ENCODE measurements at regions of chr1 and their contacts with region 1.

Region 1: DNA sequence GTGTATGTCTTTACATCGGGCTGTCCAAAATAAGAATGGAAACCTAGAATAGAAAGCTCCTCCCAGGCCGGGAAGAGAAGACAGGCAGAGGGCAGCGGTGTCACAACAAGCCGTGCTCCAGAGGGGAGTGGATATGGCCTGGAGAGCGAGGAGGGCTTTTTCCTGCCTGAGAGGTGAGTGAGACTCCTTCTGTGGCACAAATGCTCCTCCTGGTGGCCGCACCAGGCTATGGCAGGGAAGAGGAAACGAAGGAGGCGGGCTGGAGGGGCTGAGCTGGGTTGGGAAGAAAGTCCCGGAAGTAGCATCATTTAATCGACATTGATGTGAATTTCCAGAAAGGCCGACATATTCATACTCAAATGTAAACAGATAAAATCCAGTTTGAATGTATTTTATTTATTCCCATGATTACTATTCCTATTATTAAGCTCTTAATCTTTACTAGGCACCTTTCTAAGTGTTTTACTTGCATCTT is 54.7 kb downstream of the MEF2D start:
- DNase-seq: peak; percentile 79 to 86 (median 84)
- ATAC-seq: peak; percentile 96
- H3K4me3 ChIP-seq: no peak overlapping the region
- H3K27ac ChIP-seq: no peak overlapping the region
- H3K4me1 ChIP-seq: peaks cover under 1 to 5% of the 10 kb centered on the region in 2 experiments; a peak in 2 of 5 replicates
- H3K27me3 ChIP-seq: peaks cover 33 to 34% of the 10 kb centered on the region in 2 experiments
- CTCF ChIP-seq: peak; percentile 94 to 97 (median 96)
- EP300 ChIP-seq: no peak
- POLR2A ChIP-seq: no peak
- RAD21 ChIP-seq: peak; percentile 93 to 98

Region 2: GRCh38 chr1:155884031-155884960 is 561.5 kb before region 1 on chr1:
- CTCF ChIA-PET with region 1: no interaction called
- POLR2A ChIA-PET with region 1: no interaction called
- in situ Hi-C with region 1: no loop called
- intact Hi-C with region 1: no loop called
- DNase-seq: peak in 2 of 4 experiments; percentile 29 to 45
- ATAC-seq: peak; percentile 79
- H3K4me3 ChIP-seq: no peak overlapping the region
- H3K27ac ChIP-seq: peak overlapping the region; percentile 27; the same call in 2 of the 3 replicates
- H3K4me1 ChIP-seq: peaks cover 8 to 23% of the 10 kb centered on the region in 2 experiments; a peak in 4 of 5 replicates
- H3K27me3 ChIP-seq: no peaks in the 10 kb centered on the region; a peak in 1 of 5 replicates
- CTCF ChIP-seq: no peak
- EP300 ChIP-seq: no peak
- POLR2A ChIP-seq: no peak
- RAD21 ChIP-seq: no peak

Region 3: GRCh38 chr1:156233426-156234127 is 212.2 kb before region 1 on chr1:
- CTCF ChIA-PET with region 1: no interaction called
- POLR2A ChIA-PET with region 1: no interaction called
- in situ Hi-C with region 1: no loop called
- intact Hi-C with region 1: loop called (anchors 5 kb)
- DNase-seq: peak in 1 of 4 experiments; percentile 18
- ATAC-seq: no peak
- H3K4me3 ChIP-seq: no peak overlapping the region
- H3K27ac ChIP-seq: no peak overlapping the region
- H3K4me1 ChIP-seq: peaks cover 9 to 18% of the 10 kb centered on the region in 2 experiments; a peak in 4 of 5 replicates
- H3K27me3 ChIP-seq: no peaks in the 10 kb centered on the region
- CTCF ChIP-seq: no peak
- EP300 ChIP-seq: no peak
- POLR2A ChIP-seq: no peak
- RAD21 ChIP-seq: no peak

Region 4: DNA sequence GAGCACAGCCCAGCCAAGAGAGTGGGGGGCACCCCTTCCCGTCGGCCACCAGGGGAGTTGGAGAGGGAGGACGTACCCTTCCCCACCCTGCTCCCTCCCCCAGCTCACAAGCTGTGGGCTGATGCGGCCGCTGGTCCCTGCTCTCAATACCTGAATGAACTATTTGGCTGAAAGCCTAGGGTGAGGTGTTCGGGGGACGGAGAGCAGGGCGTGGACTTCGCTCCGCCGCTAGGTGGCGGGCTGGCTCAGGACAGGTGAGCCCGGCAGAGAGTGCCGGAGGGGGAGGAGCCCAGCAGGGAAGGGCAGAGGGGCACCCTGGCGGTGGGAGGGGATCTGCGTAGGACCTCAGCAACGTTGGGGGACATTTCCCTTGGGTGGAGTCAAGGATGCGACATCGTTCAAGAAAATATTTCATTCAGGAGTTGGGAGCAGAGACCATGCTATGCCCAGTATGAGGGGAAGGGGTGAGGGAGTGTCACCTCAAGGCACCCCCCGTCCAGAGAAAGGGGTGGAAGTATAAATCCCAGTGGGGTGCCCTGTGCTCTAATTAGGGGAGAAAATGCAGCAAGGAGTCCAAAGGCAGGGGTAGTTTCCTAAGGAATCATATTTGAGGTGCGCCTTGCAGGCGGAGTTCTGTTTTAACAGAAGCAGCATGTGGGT is 88.8 kb before region 1 on chr1:
- CTCF ChIA-PET with region 1: interaction called, 23 read pairs
- POLR2A ChIA-PET with region 1: no interaction called
- in situ Hi-C with region 1: no loop called
- intact Hi-C with region 1: no loop called
- DNase-seq: peak; percentile 74 to 89 (median 82)
- ATAC-seq: peak; percentile 98
- H3K4me3 ChIP-seq: no peak overlapping the region
- H3K27ac ChIP-seq: no peak overlapping the region
- H3K4me1 ChIP-seq: peaks cover 0 to 6% of the 10 kb centered on the region in 2 experiments; a peak in 2 of 5 replicates
- H3K27me3 ChIP-seq: peaks cover 20 to 22% of the 10 kb centered on the region in 2 experiments
- CTCF ChIP-seq: peak; percentile 75 to 90 (median 80)
- EP300 ChIP-seq: no peak
- POLR2A ChIP-seq: no peak
- RAD21 ChIP-seq: peak; percentile 37 to 57; a peak in 3 of 4 replicates

Region 5: GRCh38 chr1:156383023-156383422 is 62.8 kb before region 1 on chr1:
- CTCF ChIA-PET with region 1: interaction called, 240 read pairs
- POLR2A ChIA-PET with region 1: interaction called, 26 read pairs
- in situ Hi-C with region 1: loop called (anchors 5 kb)
- intact Hi-C with region 1: loop called (anchors 1 kb)
- DNase-seq: peak; percentile 80 to 86 (median 84)
- ATAC-seq: peak; percentile 98
- H3K4me3 ChIP-seq: no peak overlapping the region
- H3K27ac ChIP-seq: no peak overlapping the region
- H3K4me1 ChIP-seq: peaks cover 8 to 10% of the 10 kb centered on the region in 2 experiments; a peak in 3 of 5 replicates
- H3K27me3 ChIP-seq: peaks cover 5 to 13% of the 10 kb centered on the region in 2 experiments; a peak in 3 of 5 replicates
- CTCF ChIP-seq: peak; percentile 89 to 92 (median 90)
- EP300 ChIP-seq: no peak
- POLR2A ChIP-seq: no peak
- RAD21 ChIP-seq: peak; percentile 78 to 92